ENCODE measurements at regions of chr15 and their contacts with region 1.

Region 1: DNA sequence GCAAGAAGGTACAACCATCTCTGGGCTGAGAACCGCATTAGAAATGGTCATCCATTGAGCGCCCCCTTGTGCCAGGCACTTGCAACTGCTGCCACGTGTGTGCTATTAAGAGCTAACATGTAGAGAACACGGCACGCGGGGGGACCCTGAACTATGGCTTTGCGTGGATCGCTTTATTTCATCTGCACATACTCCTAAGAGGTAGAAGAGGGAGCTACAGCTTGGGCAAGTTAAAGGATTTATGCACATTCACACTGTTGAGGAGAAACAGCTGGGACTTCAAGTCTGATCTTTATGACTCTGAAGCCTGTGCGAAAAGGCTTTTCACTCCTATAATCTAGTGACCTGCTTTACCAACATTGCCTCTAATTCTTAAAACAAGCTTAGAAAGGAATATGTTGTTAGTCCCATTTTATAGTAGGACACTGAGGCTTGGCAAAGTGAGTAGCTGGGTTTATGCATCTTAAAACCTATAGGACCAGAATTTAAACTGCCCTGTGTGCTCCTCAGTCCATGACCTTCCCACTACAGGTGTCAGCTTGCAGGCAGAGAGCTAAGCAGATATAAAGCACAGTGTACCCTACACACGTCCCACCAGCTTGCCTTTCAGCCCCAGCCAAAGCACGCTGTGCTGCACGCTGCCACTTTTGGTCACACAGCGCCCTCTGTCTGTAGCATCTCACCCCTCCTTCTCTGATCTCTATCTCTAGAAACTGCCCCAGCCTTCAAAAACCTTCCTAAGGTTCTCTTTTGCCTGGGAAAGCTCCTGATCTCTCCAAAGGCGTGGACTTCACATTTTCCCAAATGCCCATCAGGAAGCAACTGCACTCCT is 57.8 kb downstream of the STARD5 start:
- DNase-seq: peak; percentile 90
- H3K4me3 ChIP-seq: no peak overlapping the region
- H3K27ac ChIP-seq: no peak overlapping the region
- H3K4me1 ChIP-seq: peaks cover 0 to 13% (median 12%) of the 10 kb centered on the region in 4 donors
- H3K27me3 ChIP-seq: peaks cover 0 to 7% (median 0%) of the 10 kb centered on the region in 3 donors
- CTCF ChIP-seq: peak; percentile 74 to 92 (median 76)
- EP300 ChIP-seq: no peak
- POLR2A ChIP-seq: no peak

Region 2: GRCh38 chr15:80977627-80978036 is 288.5 kb before region 1 on chr15:
- intact Hi-C with region 1: loop called (anchors 2 kb)
- DNase-seq: peak; percentile 72
- H3K4me3 ChIP-seq: no peak overlapping the region
- H3K27ac ChIP-seq: no peak overlapping the region
- H3K4me1 ChIP-seq: peaks cover 0 to 20% (median 5%) of the 10 kb centered on the region in 4 donors
- H3K27me3 ChIP-seq: no peaks in the 10 kb centered on the region
- CTCF ChIP-seq: peak in 3 of 4 experiments; percentile 18 to 47 (median 32)
- EP300 ChIP-seq: no peak
- POLR2A ChIP-seq: no peak

Region 3: GRCh38 chr15:81106560-81106959 is 159.6 kb before region 1 on chr15:
- intact Hi-C with region 1: loop called (anchors 1 kb)
- DNase-seq: no peak
- H3K4me3 ChIP-seq: no peak overlapping the region
- H3K27ac ChIP-seq: no peak overlapping the region
- H3K4me1 ChIP-seq: peaks cover 0 to 4% (median 0%) of the 10 kb centered on the region in 4 donors
- H3K27me3 ChIP-seq: no peaks in the 10 kb centered on the region
- CTCF ChIP-seq: peak; percentile 55 to 75 (median 70)
- EP300 ChIP-seq: no peak
- POLR2A ChIP-seq: no peak

Region 4: GRCh38 chr15:81155375-81156218 is 110.6 kb before region 1 on chr15:
- intact Hi-C with region 1: loop called (anchors 2 kb)
- DNase-seq: peak; percentile 78
- H3K4me3 ChIP-seq: no peak overlapping the region
- H3K27ac ChIP-seq: peak overlapping the region in 1 of 4 donors; percentile 1
- H3K4me1 ChIP-seq: peaks cover 0 to 17% (median 12%) of the 10 kb centered on the region in 4 donors
- H3K27me3 ChIP-seq: no peaks in the 10 kb centered on the region
- CTCF ChIP-seq: peak; percentile 16 to 45 (median 36)
- EP300 ChIP-seq: no peak
- POLR2A ChIP-seq: no peak

Measured in sigmoid colon (tissue), 7 donors.